ENCODE measurements at regions of chr20 and their contacts with region 1.

Region 1: DNA sequence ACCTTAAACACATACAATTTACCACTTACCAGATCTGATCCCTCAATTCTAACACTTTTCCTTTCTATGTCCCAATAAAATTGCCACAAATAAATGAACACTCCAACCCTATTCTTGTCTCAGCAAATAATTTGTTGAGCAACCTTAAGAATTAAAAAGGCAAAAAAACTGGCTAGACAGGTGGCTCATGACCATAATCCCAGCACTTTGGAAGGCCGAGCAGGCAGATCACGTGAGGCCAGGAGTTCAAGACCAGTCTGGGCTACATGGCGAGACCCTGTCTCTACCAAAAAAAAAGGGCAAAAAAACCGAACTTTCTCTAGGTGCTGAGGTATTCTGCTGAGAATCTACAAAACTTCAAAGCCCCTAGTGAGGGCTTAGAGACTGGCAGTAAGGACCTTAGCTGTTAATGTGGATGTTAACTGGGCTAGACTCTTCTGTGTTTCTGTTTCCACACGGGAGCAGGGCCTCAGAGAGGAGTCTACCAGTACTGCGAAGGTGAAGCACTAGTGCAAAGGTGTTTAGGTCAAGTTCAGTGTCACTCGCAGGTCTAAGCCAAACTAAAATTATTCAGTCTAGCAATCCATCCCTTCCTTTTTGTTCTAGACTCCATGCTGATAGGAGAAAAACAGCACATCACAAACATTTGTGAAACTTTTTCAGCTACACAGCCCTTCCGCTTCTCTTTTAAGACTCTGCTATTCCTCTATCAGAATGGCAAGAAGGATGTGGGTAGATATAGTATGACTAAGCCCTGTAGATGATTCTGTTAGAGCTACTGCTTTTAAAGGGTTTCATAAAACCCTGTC is 2.6 kb downstream of the FASTKD5 start:
- DNase-seq: peak in 4 of 5 donors; percentile 32 to 62 (median 41)
- H3K4me3 ChIP-seq: peak overlapping the region; percentile 8 to 24
- H3K4me3 Mint-ChIP-seq: peak overlapping the region; percentile 71 to 98 (median 82)
- H3K27ac ChIP-seq: peak overlapping the region; percentile 30
- H3K27ac Mint-ChIP-seq: peak overlapping the region; percentile 82 to 98 (median 83)
- H3K4me1 ChIP-seq: peaks cover 54% of the 10 kb centered on the region
- H3K4me1 Mint-ChIP-seq: peaks cover 47 to 73% (median 64%) of the 10 kb centered on the region in 4 donors
- H3K27me3 ChIP-seq: no peaks in the 10 kb centered on the region
- H3K27me3 Mint-ChIP-seq: no peaks in the 10 kb centered on the region

Region 2: GRCh38 chr20:2922957-2923356 is 234.1 kb before region 1 on chr20:
- CTCF ChIA-PET with region 1: no interaction called
- POLR2A ChIA-PET with region 1: no interaction called
- intact Hi-C with region 1: no loop called
- DNase-seq: no peak
- H3K4me3 ChIP-seq: no peak overlapping the region
- H3K4me3 Mint-ChIP-seq: no peak overlapping the region
- H3K27ac ChIP-seq: no peak overlapping the region
- H3K27ac Mint-ChIP-seq: no peak overlapping the region
- H3K4me1 ChIP-seq: no peaks in the 10 kb centered on the region
- H3K4me1 Mint-ChIP-seq: peaks cover 16 to 32% (median 18%) of the 10 kb centered on the region in 4 donors
- H3K27me3 ChIP-seq: no peaks in the 10 kb centered on the region
- H3K27me3 Mint-ChIP-seq: no peaks in the 10 kb centered on the region

Region 3: DNA sequence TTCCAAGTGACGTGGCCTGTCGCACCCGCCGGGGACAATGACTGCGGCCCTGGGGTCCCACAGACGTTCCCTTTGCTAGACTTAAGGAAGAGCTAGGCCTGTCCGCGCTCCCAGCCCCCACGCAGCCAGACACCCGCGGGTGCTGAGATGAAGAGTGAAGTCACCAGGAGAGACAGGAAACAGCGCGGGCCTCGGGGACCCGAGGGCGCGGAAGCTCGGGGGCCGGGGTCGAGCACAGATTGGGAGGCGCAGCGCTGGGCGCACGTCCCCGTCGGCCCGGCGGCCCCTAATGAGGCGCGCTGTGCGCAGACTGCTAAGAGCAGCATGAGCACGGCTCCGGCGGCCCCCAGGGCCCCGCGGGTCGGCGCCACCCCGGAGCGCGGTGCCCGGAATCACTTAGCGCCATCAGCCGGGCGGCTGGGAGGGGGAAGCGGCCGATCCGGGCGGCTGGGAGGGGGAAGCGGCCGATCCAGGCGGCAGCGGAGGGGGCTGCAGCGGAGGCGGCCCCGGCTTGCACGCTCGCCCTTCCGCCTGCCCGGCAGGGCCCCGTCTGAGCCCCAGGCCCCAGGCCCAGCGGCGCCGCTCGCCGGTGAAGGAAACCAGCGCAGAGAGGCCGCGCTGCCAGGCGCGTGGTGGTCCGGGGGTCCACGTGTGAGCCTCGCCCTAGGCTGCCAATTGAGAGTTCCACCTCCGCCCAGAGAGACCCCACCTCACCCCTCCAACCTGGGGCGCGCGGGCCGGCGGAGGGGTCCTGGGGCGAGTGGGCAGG is 64.2 kb before region 1 on chr20:
- CTCF ChIA-PET with region 1: no interaction called
- POLR2A ChIA-PET with region 1: interaction called, 12 read pairs
- intact Hi-C with region 1: no loop called
- DNase-seq: peak; percentile 26 to 54 (median 40)
- H3K4me3 ChIP-seq: no peak overlapping the region
- H3K4me3 Mint-ChIP-seq: peak overlapping the region; percentile 86 to 93 (median 91)
- H3K27ac ChIP-seq: peak overlapping the region; percentile 39
- H3K27ac Mint-ChIP-seq: peak overlapping the region; percentile 88 to 98 (median 94)
- H3K4me1 ChIP-seq: peaks cover 16% of the 10 kb centered on the region
- H3K4me1 Mint-ChIP-seq: peaks cover 9 to 26% (median 12%) of the 10 kb centered on the region in 4 donors
- H3K27me3 ChIP-seq: peaks cover 6% of the 10 kb centered on the region
- H3K27me3 Mint-ChIP-seq: peaks cover 4 to 21% of the 10 kb centered on the region in 2 donors

Region 4: DNA sequence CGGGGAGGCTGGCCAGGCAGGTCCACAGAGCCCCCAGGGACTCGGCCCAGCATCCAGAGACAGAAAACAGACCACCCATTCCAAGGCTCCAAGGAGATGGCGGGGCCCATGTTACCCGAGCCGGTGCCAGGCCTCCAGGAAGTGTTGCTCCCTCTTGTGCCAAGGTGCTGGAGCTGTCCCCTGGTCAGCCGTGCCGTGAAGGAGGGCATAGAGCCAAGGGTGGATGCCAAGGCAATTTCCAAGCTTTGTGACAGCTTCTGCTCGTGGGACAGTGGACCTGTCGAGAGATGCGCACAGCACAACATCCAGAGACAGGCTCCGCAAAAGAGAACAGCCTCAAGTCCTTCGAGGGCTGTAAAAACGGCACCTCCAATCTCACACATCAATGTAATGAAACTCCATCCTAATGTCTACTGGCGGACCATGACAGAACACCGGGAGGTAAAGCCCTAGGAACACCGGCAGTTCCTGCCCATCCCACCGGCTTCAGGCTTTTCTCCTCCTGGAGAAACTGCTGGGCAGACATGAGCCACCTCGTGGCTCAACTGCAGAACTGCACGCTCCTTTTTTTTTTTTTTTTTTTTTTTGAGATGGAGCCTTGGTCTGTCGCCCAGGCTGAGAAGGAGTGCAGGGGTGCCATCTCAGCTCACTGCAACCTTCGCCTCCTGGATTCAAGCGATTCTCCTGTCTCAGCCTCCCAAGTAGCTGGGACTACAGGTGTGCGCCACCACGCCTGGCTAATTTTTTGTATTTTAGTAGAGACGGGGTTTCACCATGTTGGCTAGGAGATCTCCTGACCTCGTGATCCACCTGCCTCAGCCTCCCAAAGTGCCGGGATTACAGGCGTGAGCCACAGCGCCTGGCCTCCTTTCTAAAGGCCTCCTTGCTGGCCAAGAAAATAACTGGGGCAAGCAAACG is 41.6 kb before region 1 on chr20:
- CTCF ChIA-PET with region 1: interaction called, 3 read pairs
- POLR2A ChIA-PET with region 1: interaction called, 14 read pairs
- intact Hi-C with region 1: loop called (anchors 1 kb)
- DNase-seq: peak in 4 of 5 donors; percentile 27 to 43 (median 34)
- H3K4me3 ChIP-seq: no peak overlapping the region
- H3K4me3 Mint-ChIP-seq: no peak overlapping the region
- H3K27ac ChIP-seq: no peak overlapping the region
- H3K27ac Mint-ChIP-seq: peak overlapping the region in 4 of 7 donors; percentile 62 to 81 (median 66)
- H3K4me1 ChIP-seq: peaks cover 6% of the 10 kb centered on the region
- H3K4me1 Mint-ChIP-seq: peaks cover 5 to 34% (median 8%) of the 10 kb centered on the region in 4 donors
- H3K27me3 ChIP-seq: no peaks in the 10 kb centered on the region
- H3K27me3 Mint-ChIP-seq: no peaks in the 10 kb centered on the region

Region 5: DNA sequence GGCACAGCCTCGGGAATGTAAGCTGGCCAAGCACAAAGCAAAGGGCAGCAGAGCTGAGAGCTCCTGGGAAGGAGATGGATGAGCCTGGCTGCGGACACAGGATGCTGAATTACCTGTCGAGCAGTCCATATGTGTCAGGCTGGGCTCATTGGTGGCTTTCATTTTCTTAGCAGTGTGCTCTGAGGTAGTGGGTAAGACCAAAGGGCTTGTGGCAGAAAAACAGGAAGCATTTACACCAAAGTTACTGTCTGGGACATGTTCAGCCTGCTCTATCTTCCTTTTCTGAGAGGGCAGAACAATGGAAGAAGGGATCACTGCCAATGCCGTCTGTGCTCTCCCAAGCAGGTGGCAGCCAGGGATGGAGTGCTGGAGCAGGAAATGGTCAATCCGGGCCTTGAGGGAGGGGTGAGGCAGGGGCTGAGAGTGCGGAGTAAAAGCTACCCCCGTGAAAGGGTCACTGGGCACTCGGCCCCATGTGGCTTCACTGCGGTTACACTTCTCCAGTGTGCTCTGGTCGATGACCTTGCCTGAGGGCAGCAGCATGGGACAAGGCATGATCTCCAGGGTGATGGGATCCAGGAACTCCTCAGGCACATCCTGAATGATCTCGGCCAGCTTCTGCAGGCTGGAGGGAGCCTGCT is 35.6 kb before region 1 on chr20:
- CTCF ChIA-PET with region 1: interaction called, 4 read pairs
- POLR2A ChIA-PET with region 1: interaction called, 14 read pairs
- intact Hi-C with region 1: loop called (anchors 1 kb)
- DNase-seq: peak in 4 of 5 donors; percentile 32 to 48 (median 45)
- H3K4me3 ChIP-seq: peak overlapping the region; percentile 2 to 17
- H3K4me3 Mint-ChIP-seq: peak overlapping the region; percentile 61 to 80 (median 69)
- H3K27ac ChIP-seq: peak overlapping the region; percentile 18
- H3K27ac Mint-ChIP-seq: peak overlapping the region; percentile 80 to 98 (median 96)
- H3K4me1 ChIP-seq: peaks cover 35% of the 10 kb centered on the region
- H3K4me1 Mint-ChIP-seq: peaks cover 22 to 55% (median 35%) of the 10 kb centered on the region in 4 donors
- H3K27me3 ChIP-seq: no peaks in the 10 kb centered on the region
- H3K27me3 Mint-ChIP-seq: no peaks in the 10 kb centered on the region

Region 6: DNA sequence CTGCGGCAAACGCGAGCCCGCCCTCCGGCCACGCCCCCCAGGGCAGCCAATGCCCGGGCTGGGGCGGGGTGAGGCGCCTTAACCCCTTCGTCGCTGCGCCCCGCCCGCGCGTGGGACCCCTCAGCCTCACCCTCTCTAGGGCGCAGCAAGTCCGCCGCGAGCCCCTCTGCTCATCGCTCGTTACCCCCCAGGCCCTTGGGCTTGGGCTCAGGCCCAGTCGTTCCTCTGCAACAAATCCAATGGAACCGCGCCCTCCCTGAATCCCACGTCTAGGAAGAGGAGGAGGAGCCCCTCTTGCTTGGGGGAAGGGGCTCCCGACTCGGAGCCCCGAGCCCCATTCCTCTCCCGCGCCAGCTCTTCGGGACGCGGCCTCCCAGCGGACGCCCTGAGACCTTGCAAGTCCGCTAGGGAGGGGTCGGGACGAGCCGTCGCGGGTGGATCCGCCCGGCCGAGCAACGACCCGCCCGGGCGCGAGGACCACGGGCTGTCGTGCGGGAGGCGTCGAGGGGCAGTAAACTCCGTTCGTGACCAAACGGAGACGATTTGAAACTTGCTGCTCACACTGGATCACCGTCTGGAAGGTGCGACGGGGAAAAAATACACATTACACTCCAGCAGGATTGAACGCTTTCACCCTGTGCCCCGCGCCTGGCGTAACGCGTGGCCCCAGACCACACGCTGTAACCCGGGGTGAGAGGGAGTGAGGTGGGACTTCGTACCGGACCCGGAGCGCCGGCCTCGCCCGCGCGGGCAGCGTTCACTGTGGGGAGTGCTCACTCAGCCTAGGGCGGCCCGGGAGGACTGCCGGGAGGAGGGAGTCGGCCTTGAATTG is 16.8 kb after region 1 on chr20:
- CTCF ChIA-PET with region 1: interaction called, 9 read pairs
- POLR2A ChIA-PET with region 1: interaction called, 8 read pairs
- intact Hi-C with region 1: loop called (anchors 1 kb)
- DNase-seq: peak in 2 of 5 donors; percentile 46 to 90
- H3K4me3 ChIP-seq: peak overlapping the region; percentile 73 to 89
- H3K4me3 Mint-ChIP-seq: peak overlapping the region; percentile 80 to 88 (median 84)
- H3K27ac ChIP-seq: peak overlapping the region; percentile 89
- H3K27ac Mint-ChIP-seq: peak overlapping the region; percentile 52 to 92 (median 87)
- H3K4me1 ChIP-seq: peaks cover 15% of the 10 kb centered on the region
- H3K4me1 Mint-ChIP-seq: peaks cover 4 to 25% (median 11%) of the 10 kb centered on the region in 4 donors
- H3K27me3 ChIP-seq: no peaks in the 10 kb centered on the region
- H3K27me3 Mint-ChIP-seq: peaks cover 6 to 12% of the 10 kb centered on the region in 2 donors

Region 7: DNA sequence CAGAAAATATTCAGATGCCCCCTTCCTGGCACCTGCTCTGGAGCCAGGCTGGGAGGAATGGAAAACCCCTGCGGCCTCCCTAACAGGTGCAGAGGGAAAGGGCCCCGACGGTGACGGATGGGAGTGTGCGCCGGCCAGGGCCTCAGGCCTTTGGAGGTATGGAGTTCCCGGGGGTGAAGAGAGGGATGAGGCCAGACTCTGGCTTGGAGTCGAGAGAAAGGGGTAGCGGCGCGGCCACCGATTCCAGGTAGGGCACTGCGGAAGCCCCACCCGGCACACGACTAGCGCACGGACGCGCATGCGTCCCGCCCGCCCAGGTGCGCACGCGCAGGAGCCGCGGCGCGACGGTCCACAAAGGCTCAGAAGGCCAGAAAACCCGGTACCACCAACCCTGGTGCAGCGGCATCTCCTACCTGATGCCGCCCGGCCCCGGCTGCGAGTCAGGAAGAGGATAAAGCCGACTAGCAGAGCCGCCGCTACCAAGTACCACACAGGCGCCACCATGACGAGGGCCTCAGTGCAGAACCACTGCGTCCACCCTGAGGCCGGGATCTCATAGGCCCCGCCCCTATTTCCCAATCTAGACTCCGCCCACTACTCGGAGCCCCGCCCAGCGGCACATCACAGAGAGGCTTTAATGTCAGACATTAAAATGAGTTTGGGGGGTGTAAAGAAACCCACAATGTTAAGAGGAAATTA is 47.3 kb after region 1 on chr20 and contains the start of gene DDRGK1:
- CTCF ChIA-PET with region 1: interaction called, 3 read pairs
- POLR2A ChIA-PET with region 1: interaction called, 29 read pairs
- intact Hi-C with region 1: loop called (anchors 1 kb)
- DNase-seq: peak; percentile 86 to 92 (median 91)
- H3K4me3 ChIP-seq: peak within 1 kb of the TSS; percentile 94 to 99
- H3K4me3 Mint-ChIP-seq: peak within 1 kb of the TSS; percentile 93 to 98 (median 97)
- H3K27ac ChIP-seq: peak within 1 kb of the TSS; percentile 91
- H3K27ac Mint-ChIP-seq: peak within 1 kb of the TSS; percentile 96 to 97 (median 97)
- H3K4me1 ChIP-seq: peaks cover 31% of the 10 kb centered on the region
- H3K4me1 Mint-ChIP-seq: peaks cover 9 to 38% (median 24%) of the 10 kb centered on the region in 4 donors
- H3K27me3 ChIP-seq: no peaks in the 10 kb centered on the region
- H3K27me3 Mint-ChIP-seq: no peaks in the 10 kb centered on the region
- total RNA-seq, gene DDRGK1: 55.6 to 61.0 TPM

Region 8: DNA sequence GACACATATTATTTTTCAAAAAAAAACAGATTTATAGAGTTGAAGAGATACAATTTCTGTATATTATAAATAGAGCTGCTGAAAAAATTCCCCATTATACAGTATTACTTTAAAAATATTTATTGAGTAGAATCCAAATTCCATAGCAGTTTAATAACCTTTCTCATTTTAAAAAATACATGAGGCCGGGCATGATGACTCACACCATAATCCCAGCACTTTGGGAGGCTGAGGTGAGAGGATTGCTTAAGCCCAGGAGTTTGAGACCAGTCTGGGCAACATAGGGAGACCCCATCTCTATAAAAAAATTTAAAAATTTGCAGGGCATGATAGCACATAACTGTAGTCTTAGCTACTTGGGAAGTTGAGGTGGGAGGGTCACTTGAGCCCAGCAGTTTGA is 326.8 kb after region 1 on chr20:
- CTCF ChIA-PET with region 1: no interaction called
- POLR2A ChIA-PET with region 1: no interaction called
- intact Hi-C with region 1: no loop called
- DNase-seq: no peak
- H3K4me3 ChIP-seq: no peak overlapping the region
- H3K4me3 Mint-ChIP-seq: no peak overlapping the region
- H3K27ac ChIP-seq: no peak overlapping the region
- H3K27ac Mint-ChIP-seq: peak overlapping the region in 2 of 7 donors; percentile 23 to 31
- H3K4me1 ChIP-seq: no peaks in the 10 kb centered on the region
- H3K4me1 Mint-ChIP-seq: peaks cover 5 to 22% (median 15%) of the 10 kb centered on the region in 4 donors
- H3K27me3 ChIP-seq: no peaks in the 10 kb centered on the region
- H3K27me3 Mint-ChIP-seq: no peaks in the 10 kb centered on the region